Left colon (tissue), 2 donors: ENCODE measurements at regions of chr7 and their contacts with region 1.

Region 1: DNA sequence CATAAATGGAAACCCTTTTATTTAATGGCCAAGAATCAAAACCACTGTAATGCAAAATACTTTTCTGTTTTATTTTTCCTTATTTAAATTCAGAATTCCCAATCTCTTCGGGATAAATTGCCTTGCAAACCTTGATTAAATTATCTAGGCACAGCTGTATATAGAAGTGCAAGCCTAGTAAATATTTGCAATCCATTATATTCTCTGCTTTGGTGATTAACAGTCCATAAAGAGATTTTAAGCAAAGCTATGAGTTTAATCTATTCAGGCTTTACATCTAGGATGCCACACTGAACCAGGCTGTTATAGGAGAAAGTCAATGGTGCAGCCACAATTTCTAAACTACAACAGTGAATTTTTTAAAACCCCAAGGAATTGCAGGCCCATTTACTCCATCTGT is 43.6 kb upstream of the THSD7A start:
- DNase-seq: no peak
- ATAC-seq: no peak

Region 2: GRCh38 chr7:12013983-12014382 is 138.3 kb after region 1 on chr7:
- intact Hi-C with region 1: loop called in 1 of 2 experiments (anchors 10 kb)
- DNase-seq: no peak
- ATAC-seq: no peak